ENCODE measurements at regions of chr1 and their contacts with region 1.

Region 1: GRCh38 chr1:226547754-226548191 is 791 bp upstream of the STUM start:
- DNase-seq: peak in 8 of 9 donors; percentile 17 to 56 (median 50)
- ATAC-seq: peak; percentile 75
- H3K4me3 ChIP-seq: no peak overlapping the region
- H3K4me3 Mint-ChIP-seq: peak overlapping the region in 9 of 10 donors; percentile 17 to 70 (median 51)
- H3K27ac ChIP-seq: no peak overlapping the region
- H3K27ac Mint-ChIP-seq: no peak overlapping the region
- H3K4me1 ChIP-seq: peaks cover 15 to 17% of the 10 kb centered on the region in 2 donors
- H3K4me1 Mint-ChIP-seq: peaks cover 0 to 19% (median 10%) of the 10 kb centered on the region in 7 donors
- H3K27me3 ChIP-seq: no peaks in the 10 kb centered on the region
- H3K27me3 Mint-ChIP-seq: peaks cover 37 to 77% (median 39%) of the 10 kb centered on the region in 5 donors

Region 2: GRCh38 chr1:226424228-226425003 is 123.4 kb before region 1 on chr1:
- CTCF ChIA-PET with region 1: interaction called, 8 read pairs
- POLR2A ChIA-PET with region 1: interaction called, 8 read pairs
- intact Hi-C with region 1: loop called (anchors 1 kb)
- DNase-seq: peak in 5 of 9 donors; percentile 29 to 54 (median 44)
- ATAC-seq: peak; percentile 68
- H3K4me3 ChIP-seq: peak overlapping the region; percentile 33
- H3K4me3 Mint-ChIP-seq: peak overlapping the region in 1 of 10 donors; percentile 21
- H3K27ac ChIP-seq: no peak overlapping the region
- H3K27ac Mint-ChIP-seq: no peak overlapping the region
- H3K4me1 ChIP-seq: peaks cover 11% of the 10 kb centered on the region in 2 donors
- H3K4me1 Mint-ChIP-seq: peaks cover 15 to 34% (median 21%) of the 10 kb centered on the region in 7 donors
- H3K27me3 ChIP-seq: no peaks in the 10 kb centered on the region
- H3K27me3 Mint-ChIP-seq: peaks cover 0 to 8% (median 0%) of the 10 kb centered on the region in 5 donors

Region 3: GRCh38 chr1:226457307-226457712 is 90.5 kb before region 1 on chr1:
- CTCF ChIA-PET with region 1: interaction called, 3 read pairs
- POLR2A ChIA-PET with region 1: no interaction called
- intact Hi-C with region 1: loop called in 1 of 2 experiments (anchors 5 kb)
- DNase-seq: peak; percentile 13 to 76 (median 52)
- ATAC-seq: peak; percentile 90
- H3K4me3 ChIP-seq: peak overlapping the region; percentile 54
- H3K4me3 Mint-ChIP-seq: peak overlapping the region; percentile 47 to 88 (median 78)
- H3K27ac ChIP-seq: peak overlapping the region; percentile 4
- H3K27ac Mint-ChIP-seq: peak overlapping the region; percentile 17 to 88 (median 65)
- H3K4me1 ChIP-seq: peaks cover 7 to 16% of the 10 kb centered on the region in 2 donors
- H3K4me1 Mint-ChIP-seq: peaks cover 8 to 16% (median 14%) of the 10 kb centered on the region in 7 donors
- H3K27me3 ChIP-seq: no peaks in the 10 kb centered on the region
- H3K27me3 Mint-ChIP-seq: peaks cover 0 to 4% (median 0%) of the 10 kb centered on the region in 5 donors

Region 4: GRCh38 chr1:226608699-226609505 is 61.1 kb after region 1 on chr1:
- CTCF ChIA-PET with region 1: no interaction called
- POLR2A ChIA-PET with region 1: no interaction called
- intact Hi-C with region 1: loop called (anchors 1 to 2 kb)
- DNase-seq: peak; percentile 44 to 75 (median 62)
- ATAC-seq: peak; percentile 84
- H3K4me3 ChIP-seq: no peak overlapping the region
- H3K4me3 Mint-ChIP-seq: no peak overlapping the region
- H3K27ac ChIP-seq: no peak overlapping the region
- H3K27ac Mint-ChIP-seq: peak overlapping the region in 1 of 9 donors; percentile 21
- H3K4me1 ChIP-seq: no peaks in the 10 kb centered on the region
- H3K4me1 Mint-ChIP-seq: peaks cover 0 to 3% (median 0%) of the 10 kb centered on the region in 7 donors
- H3K27me3 ChIP-seq: no peaks in the 10 kb centered on the region
- H3K27me3 Mint-ChIP-seq: peaks cover 0 to 6% (median 0%) of the 10 kb centered on the region in 5 donors

Region 5: GRCh38 chr1:226626577-226626956 is 78.8 kb after region 1 on chr1:
- CTCF ChIA-PET with region 1: interaction called, 3 read pairs
- POLR2A ChIA-PET with region 1: no interaction called
- intact Hi-C with region 1: loop called in 1 of 2 experiments (anchors 5 kb)
- DNase-seq: peak; percentile 62 to 85 (median 76)
- ATAC-seq: peak; percentile 97
- H3K4me3 ChIP-seq: peak overlapping the region; percentile 25
- H3K4me3 Mint-ChIP-seq: peak overlapping the region; percentile 29 to 72 (median 56)
- H3K27ac ChIP-seq: no peak overlapping the region
- H3K27ac Mint-ChIP-seq: peak overlapping the region in 7 of 9 donors; percentile 43 to 85 (median 67)
- H3K4me1 ChIP-seq: peaks cover 8 to 10% of the 10 kb centered on the region in 2 donors
- H3K4me1 Mint-ChIP-seq: peaks cover 9 to 33% (median 27%) of the 10 kb centered on the region in 7 donors
- H3K27me3 ChIP-seq: no peaks in the 10 kb centered on the region
- H3K27me3 Mint-ChIP-seq: peaks cover 0 to 8% (median 0%) of the 10 kb centered on the region in 5 donors